ENCODE measurements at regions of chr6 and their contacts with region 1.

Region 1: GRCh38 chr6:72616406-72617015 is 5.4 kb upstream of the KCNQ5 start:
- DNase-seq: peak; percentile 49
- H3K4me3 Mint-ChIP-seq: no peak overlapping the region
- H3K27ac Mint-ChIP-seq: no peak overlapping the region
- H3K4me1 Mint-ChIP-seq: peaks cover 7% of the 10 kb centered on the region
- H3K27me3 Mint-ChIP-seq: no peaks in the 10 kb centered on the region
- CTCF ChIP-seq: peak; percentile 79

Region 2: DNA sequence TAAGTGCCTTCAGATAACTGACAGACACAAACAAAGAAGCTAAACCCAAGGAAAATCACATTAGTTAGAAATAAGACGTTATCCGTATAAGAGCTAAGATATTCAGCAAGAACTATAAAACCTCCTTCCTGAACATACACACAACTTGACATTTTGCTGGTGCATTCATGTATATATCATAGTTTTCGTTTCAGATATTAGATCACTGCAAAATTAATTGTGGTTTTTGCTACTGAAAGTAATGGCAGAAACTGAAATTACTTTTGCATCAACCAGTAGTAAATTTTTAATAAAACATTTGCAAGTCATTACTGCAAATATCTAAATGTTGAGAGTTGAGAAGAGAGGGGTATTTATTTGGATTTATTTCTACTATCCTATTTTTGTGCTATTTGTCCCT is 20.7 kb before region 1 on chr6:
- CTCF ChIA-PET with region 1: interaction called, 12 read pairs
- POLR2A ChIA-PET with region 1: no interaction called
- intact Hi-C with region 1: no loop called
- DNase-seq: no peak
- H3K4me3 Mint-ChIP-seq: no peak overlapping the region
- H3K27ac Mint-ChIP-seq: no peak overlapping the region
- H3K4me1 Mint-ChIP-seq: no peaks in the 10 kb centered on the region
- H3K27me3 Mint-ChIP-seq: peaks cover 43% of the 10 kb centered on the region
- CTCF ChIP-seq: no peak

Region 3: GRCh38 chr6:72733045-72733444 is 116.5 kb after region 1 on chr6:
- CTCF ChIA-PET with region 1: no interaction called
- POLR2A ChIA-PET with region 1: no interaction called
- intact Hi-C with region 1: no loop called
- DNase-seq: no peak
- H3K4me3 Mint-ChIP-seq: no peak overlapping the region
- H3K27ac Mint-ChIP-seq: no peak overlapping the region
- H3K4me1 Mint-ChIP-seq: no peaks in the 10 kb centered on the region
- H3K27me3 Mint-ChIP-seq: no peaks in the 10 kb centered on the region
- CTCF ChIP-seq: no peak

Region 4: GRCh38 chr6:73116330-73116729 is 499.8 kb after region 1 on chr6:
- CTCF ChIA-PET with region 1: interaction called, 19 read pairs
- POLR2A ChIA-PET with region 1: no interaction called
- intact Hi-C with region 1: no loop called
- DNase-seq: no peak
- H3K4me3 Mint-ChIP-seq: no peak overlapping the region
- H3K27ac Mint-ChIP-seq: no peak overlapping the region
- H3K4me1 Mint-ChIP-seq: no peaks in the 10 kb centered on the region
- H3K27me3 Mint-ChIP-seq: no peaks in the 10 kb centered on the region
- CTCF ChIP-seq: no peak

Region 5: GRCh38 chr6:73129653-73130443 is 513.3 kb after region 1 on chr6:
- CTCF ChIA-PET with region 1: interaction called, 340 read pairs
- POLR2A ChIA-PET with region 1: interaction called, 16 read pairs
- intact Hi-C with region 1: loop called (anchors 1 kb)
- DNase-seq: peak; percentile 81
- H3K4me3 Mint-ChIP-seq: no peak overlapping the region
- H3K27ac Mint-ChIP-seq: peak overlapping the region; percentile 25
- H3K4me1 Mint-ChIP-seq: no peaks in the 10 kb centered on the region
- H3K27me3 Mint-ChIP-seq: no peaks in the 10 kb centered on the region
- CTCF ChIP-seq: peak; percentile 95

Region 6: DNA sequence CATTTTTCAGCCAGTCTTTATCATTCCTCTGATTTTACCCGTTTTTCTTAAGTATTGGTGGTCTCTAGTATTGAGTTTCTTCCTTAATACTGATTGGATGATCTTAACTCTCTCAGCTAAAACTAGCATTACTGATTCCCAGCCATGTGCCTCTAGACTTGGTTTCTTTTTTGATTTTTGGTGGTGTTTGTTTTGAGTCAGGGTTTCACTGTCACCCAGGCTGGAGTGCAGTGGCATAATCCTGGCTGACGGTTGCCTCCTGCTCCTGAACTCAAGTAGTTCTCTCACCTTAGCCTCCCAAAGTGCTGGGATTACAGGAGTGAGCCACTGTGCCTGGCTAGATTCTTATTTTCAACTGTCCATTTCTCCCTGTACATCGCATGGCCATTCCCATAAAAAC is 712.7 kb after region 1 on chr6:
- CTCF ChIA-PET with region 1: interaction called, 12 read pairs
- POLR2A ChIA-PET with region 1: no interaction called
- intact Hi-C with region 1: loop called (anchors 10 kb)
- DNase-seq: no peak
- H3K4me3 Mint-ChIP-seq: no peak overlapping the region
- H3K27ac Mint-ChIP-seq: no peak overlapping the region
- H3K4me1 Mint-ChIP-seq: peaks cover 5% of the 10 kb centered on the region
- H3K27me3 Mint-ChIP-seq: peaks cover 13% of the 10 kb centered on the region
- CTCF ChIP-seq: no peak

Measured in MCF 10A (cell line).